CD14-positive monocyte (primary cell): ENCODE measurements at regions of chr17 and their contacts with region 1.

Region 1: DNA sequence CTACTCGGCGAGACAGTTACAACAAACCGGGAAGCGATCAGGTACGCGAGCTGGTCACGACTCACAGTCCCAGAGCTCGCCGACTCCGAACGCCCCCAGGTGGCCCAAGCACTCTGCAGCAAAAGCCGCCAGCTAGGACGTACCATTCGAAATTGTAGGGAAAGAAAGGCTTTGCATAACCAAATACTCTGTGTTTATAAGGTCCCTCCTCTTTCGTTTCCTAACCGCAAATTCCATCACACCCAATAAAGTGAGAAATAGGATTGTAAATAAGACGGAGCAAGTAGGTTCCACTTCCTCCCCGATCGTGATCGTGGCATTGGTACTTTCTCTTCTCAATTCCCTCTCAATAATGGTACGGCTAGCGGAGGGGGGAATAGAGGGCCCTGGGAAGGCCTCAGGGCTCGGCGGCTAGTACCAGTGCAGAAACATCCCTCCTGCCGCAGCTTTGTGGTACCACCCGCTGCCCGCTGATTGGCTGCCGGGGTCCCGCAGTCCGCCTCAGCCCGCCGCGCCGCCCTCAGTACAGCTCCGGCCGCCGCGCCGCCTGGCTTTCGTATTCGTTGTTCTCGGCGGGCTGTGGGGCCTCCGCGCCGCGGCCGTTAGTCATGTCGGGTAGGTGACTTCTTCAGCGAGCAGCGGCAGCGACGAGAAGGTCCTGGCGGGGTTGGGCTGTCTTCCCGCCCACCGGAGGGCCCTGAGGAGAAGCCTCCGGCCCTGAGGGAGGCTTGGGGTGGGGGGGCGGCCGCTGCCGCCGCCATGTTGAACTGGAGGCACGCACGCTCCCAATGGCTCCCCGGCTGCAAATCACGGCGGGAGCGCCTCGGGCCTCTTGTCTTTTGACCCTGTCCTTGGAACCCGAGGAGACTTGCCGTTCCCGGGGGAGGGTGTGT is at the start of gene TAF15:
- DNase-seq: peak; percentile 97 to 99 (median 98)
- H3K4me3 ChIP-seq: peak within 1 kb of the TSS; percentile 56 to 92 (median 90)
- H3K4me3 Mint-ChIP-seq: peak within 1 kb of the TSS; percentile 96 to 99
- H3K27ac ChIP-seq: peak within 1 kb of the TSS; percentile 91 to 92
- H3K27ac Mint-ChIP-seq: peak within 1 kb of the TSS; percentile 92 to 99 (median 97)
- H3K4me1 ChIP-seq: peaks cover 28 to 44% of the 10 kb centered on the region in 2 donors
- H3K4me1 Mint-ChIP-seq: peaks cover 45% of the 10 kb centered on the region
- H3K27me3 ChIP-seq: no peaks in the 10 kb centered on the region
- H3K27me3 Mint-ChIP-seq: no peaks in the 10 kb centered on the region
- CTCF ChIP-seq: peak; percentile 62
- polyA plus RNA-seq, gene TAF15: 6.0 to 50.6 (median 16.3) TPM

Region 2: GRCh38 chr17:34961093-34961911 is 847.9 kb before region 1 on chr17 and contains the starts of genes CCT6B and ZNF830:
- intact Hi-C with region 1: loop called in 1 of 2 experiments (anchors 10 kb)
- DNase-seq: peak; percentile 92 to 94 (median 92)
- H3K4me3 ChIP-seq: peak within 1 kb of the TSS; percentile 75 to 90 (median 87)
- H3K4me3 Mint-ChIP-seq: peak within 1 kb of the TSS; percentile 99 to 100
- H3K27ac ChIP-seq: peak within 1 kb of the TSS; percentile 87 to 94
- H3K27ac Mint-ChIP-seq: peak within 1 kb of the TSS; percentile 97 to 100 (median 99)
- H3K4me1 ChIP-seq: peaks cover 14 to 25% of the 10 kb centered on the region in 2 donors
- H3K4me1 Mint-ChIP-seq: peaks cover 13% of the 10 kb centered on the region
- H3K27me3 ChIP-seq: peaks cover 0 to 2% of the 10 kb centered on the region in 2 donors
- H3K27me3 Mint-ChIP-seq: peaks cover 4 to 5% (median 4%) of the 10 kb centered on the region in 3 donors
- CTCF ChIP-seq: no peak
- polyA plus RNA-seq, gene CCT6B: 0.95 to 1.8 (median 1.4) TPM
- polyA plus RNA-seq, gene ZNF830: 2.1 to 4.7 (median 4.2) TPM

Region 3: DNA sequence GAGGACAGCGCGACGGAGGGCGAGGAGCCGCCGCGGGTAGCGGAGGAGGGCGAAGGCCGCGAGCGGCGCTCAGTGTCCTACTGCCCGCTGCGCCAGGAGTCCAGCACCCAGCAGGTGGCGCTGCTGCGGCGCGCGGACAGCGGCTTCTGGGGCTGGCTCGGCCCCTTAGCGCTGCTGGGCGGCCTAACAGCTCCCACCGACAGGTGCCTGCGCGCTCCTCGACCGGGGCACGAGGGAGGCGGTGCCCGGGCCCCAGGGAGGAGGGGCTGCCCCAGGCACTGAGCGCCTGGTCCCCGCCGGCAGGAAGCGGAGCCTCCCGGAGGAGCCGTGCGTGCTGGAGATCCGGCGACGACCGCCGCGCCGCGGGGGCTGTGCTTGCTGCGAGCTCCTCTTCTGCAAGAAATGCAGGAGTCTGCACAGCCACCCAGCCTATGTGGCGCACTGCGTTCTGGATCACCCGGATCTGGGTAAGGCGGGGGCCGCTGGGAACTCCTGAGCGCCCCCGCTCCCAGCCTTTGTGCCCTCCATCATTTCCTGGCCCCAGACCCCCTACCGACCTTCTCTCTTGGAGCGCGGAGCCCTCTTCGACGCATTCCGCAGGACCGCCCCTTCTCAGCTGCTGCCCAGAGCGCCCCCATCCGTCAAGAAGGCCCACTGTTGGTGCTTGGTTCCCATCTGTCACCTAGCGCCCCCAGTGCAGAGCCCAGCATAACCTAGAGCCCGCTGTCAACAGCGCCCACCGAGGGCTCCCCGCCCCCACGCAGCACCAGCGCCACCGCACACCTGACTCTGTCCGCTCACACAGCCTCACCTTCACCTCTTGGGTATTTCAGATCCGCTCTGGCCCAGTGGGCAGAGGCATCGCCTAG is 44.9 kb before region 1 on chr17:
- intact Hi-C with region 1: loop called (anchors 2 kb)
- DNase-seq: peak; percentile 80 to 85 (median 80)
- H3K4me3 ChIP-seq: peak overlapping the region; percentile 41 to 76 (median 43)
- H3K4me3 Mint-ChIP-seq: peak overlapping the region; percentile 83 to 97
- H3K27ac ChIP-seq: no peak overlapping the region
- H3K27ac Mint-ChIP-seq: peak overlapping the region in 1 of 7 donors; percentile 41
- H3K4me1 ChIP-seq: peaks cover 9 to 13% of the 10 kb centered on the region in 2 donors
- H3K4me1 Mint-ChIP-seq: peaks cover 9% of the 10 kb centered on the region
- H3K27me3 ChIP-seq: peaks cover 3 to 17% of the 10 kb centered on the region in 2 donors
- H3K27me3 Mint-ChIP-seq: peaks cover 19 to 31% (median 30%) of the 10 kb centered on the region in 3 donors
- CTCF ChIP-seq: peak; percentile 97